Naive thymus-derived CD4-positive, alpha-beta T cell (primary cell): ENCODE measurements at regions of chr12 and their contacts with region 1.

Region 1: GRCh38 chr12:71610031-71610795 is 53.4 kb downstream of the ZFC3H1 start:
- DNase-seq: peak in 7 of 9 donors; percentile 8 to 43 (median 24)
- ATAC-seq: peak; percentile 70
- H3K4me3 ChIP-seq: no peak overlapping the region
- H3K4me3 Mint-ChIP-seq: peak overlapping the region in 9 of 10 donors; percentile 7 to 80 (median 62)
- H3K27ac ChIP-seq: peak overlapping the region; percentile 67
- H3K27ac Mint-ChIP-seq: peak overlapping the region; percentile 79 to 98 (median 91)
- H3K4me1 ChIP-seq: peaks cover 0 to 8% of the 10 kb centered on the region in 2 donors
- H3K4me1 Mint-ChIP-seq: peaks cover 7 to 48% (median 33%) of the 10 kb centered on the region in 7 donors
- H3K27me3 ChIP-seq: no peaks in the 10 kb centered on the region
- H3K27me3 Mint-ChIP-seq: no peaks in the 10 kb centered on the region

Region 2: DNA sequence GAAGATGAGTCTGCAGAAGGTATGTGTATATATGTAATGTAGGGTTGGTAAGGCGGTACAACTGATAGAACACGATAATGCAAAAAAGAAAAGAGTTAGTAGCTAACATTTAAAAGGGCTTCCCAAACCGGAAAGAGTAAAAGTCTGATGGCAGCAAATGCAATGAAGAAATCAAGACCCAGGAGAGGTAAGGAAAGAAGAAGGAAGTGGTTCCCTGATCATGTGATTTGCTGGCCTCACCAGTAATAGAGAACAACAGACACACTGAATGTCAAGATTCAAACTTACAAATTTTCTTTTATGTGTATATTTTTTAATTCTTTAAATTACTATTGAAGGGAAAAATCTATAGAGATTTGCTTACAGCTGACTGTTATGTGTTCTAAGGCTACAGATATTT is 35.1 kb after region 1 on chr12:
- CTCF ChIA-PET with region 1: no interaction called
- POLR2A ChIA-PET with region 1: no interaction called
- intact Hi-C with region 1: loop called (anchors 5 kb)
- DNase-seq: no peak
- ATAC-seq: peak; percentile 41
- H3K4me3 ChIP-seq: no peak overlapping the region
- H3K4me3 Mint-ChIP-seq: peak overlapping the region in 1 of 10 donors; percentile 33
- H3K27ac ChIP-seq: no peak overlapping the region
- H3K27ac Mint-ChIP-seq: peak overlapping the region in 8 of 9 donors; percentile 0 to 84 (median 23)
- H3K4me1 ChIP-seq: peaks cover 0 to 15% of the 10 kb centered on the region in 2 donors
- H3K4me1 Mint-ChIP-seq: peaks cover 25 to 51% (median 39%) of the 10 kb centered on the region in 7 donors
- H3K27me3 ChIP-seq: no peaks in the 10 kb centered on the region
- H3K27me3 Mint-ChIP-seq: no peaks in the 10 kb centered on the region